Activated B cell treated with CpG ODN at 0.5 μM for 24 hours (primary cell): ENCODE measurements at regions of chr5 and their contacts with region 1.

Region 1: DNA sequence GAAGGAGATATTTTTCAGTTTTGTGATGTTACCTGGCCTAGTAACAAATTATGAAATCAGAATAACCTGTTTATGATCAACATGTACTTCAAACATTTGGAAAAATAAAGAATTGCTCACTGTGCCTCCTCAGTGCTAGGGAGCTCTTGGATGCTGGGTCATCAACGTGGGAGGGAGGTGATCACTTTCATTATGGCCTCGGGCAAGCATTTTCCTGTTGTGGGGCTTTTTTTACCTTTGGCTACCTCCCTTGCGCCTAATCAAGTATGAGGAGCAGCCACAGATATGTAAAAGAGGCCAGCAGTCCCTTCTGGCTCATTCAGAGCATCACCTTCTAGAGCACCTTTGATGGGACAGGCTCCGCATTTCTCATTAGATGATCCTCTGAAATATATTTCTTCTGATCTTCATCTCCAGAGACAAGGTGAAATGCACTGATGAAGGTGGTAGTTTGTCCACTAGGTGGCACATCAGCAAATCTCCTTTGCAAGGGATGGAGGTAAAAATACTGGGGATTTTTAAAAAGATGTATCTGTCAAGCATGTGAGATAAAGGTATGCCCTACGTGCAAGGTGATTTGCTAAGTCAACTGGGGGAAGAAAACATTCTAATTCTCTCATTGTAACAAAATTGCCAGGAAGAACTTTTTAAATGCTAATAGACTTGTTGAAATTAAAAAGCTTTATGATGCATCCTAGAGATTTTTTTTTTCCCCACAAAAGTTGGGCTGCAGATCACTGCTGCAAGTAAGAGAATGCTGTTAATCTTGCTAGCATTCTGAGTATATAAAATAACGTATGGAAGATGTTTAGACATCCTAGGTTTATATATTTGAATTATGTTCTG is 218.2 kb downstream of the MAST4 start:
- DNase-seq: no peak
- ATAC-seq: no peak
- H3K4me3 Mint-ChIP-seq: no peak overlapping the region
- H3K27ac Mint-ChIP-seq: no peak overlapping the region
- H3K4me1 Mint-ChIP-seq: peaks cover 11% of the 10 kb centered on the region
- H3K27me3 Mint-ChIP-seq: peaks cover 5% of the 10 kb centered on the region
- CTCF ChIP-seq: no peak

Region 2: DNA sequence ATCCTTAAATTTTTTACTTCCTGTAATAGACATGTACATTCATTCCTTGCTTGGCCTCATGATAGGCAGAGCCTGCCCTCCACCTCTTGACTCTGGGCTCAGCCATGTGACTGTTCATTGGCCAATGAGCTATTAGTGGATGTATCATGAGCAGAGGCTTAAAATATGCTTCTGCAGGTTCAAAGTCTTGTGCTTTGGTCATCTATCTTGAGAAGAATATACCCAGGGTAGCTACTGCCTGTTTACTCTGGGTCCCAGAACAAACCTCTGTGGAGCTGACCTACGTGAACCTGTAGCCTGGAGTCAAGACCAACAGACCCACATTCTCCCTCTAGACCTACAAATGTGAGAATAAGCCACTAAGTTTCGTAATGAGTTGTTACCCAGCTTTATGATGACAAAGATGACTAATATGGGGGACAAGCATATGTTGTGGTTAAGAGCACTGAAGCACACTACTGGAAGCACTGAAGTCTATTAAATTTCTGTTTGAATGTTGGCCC is 26.2 kb after region 1 on chr5:
- CTCF ChIA-PET with region 1: interaction called, 3 read pairs
- POLR2A ChIA-PET with region 1: no interaction called
- intact Hi-C with region 1: loop called (anchors 1 kb)
- DNase-seq: no peak
- ATAC-seq: peak; percentile 92
- H3K4me3 Mint-ChIP-seq: no peak overlapping the region
- H3K27ac Mint-ChIP-seq: no peak overlapping the region
- H3K4me1 Mint-ChIP-seq: peaks cover 16% of the 10 kb centered on the region
- H3K27me3 Mint-ChIP-seq: peaks cover 8% of the 10 kb centered on the region
- CTCF ChIP-seq: no peak

Region 3: GRCh38 chr5:66864331-66864840 is 50.0 kb after region 1 on chr5:
- CTCF ChIA-PET with region 1: no interaction called
- POLR2A ChIA-PET with region 1: no interaction called
- intact Hi-C with region 1: loop called (anchors 1 kb)
- DNase-seq: no peak
- ATAC-seq: no peak
- H3K4me3 Mint-ChIP-seq: no peak overlapping the region
- H3K27ac Mint-ChIP-seq: no peak overlapping the region
- H3K4me1 Mint-ChIP-seq: no peaks in the 10 kb centered on the region
- H3K27me3 Mint-ChIP-seq: peaks cover 13% of the 10 kb centered on the region
- CTCF ChIP-seq: no peak

Region 4: GRCh38 chr5:66933066-66933465 is 118.7 kb after region 1 on chr5:
- CTCF ChIA-PET with region 1: no interaction called
- POLR2A ChIA-PET with region 1: no interaction called
- intact Hi-C with region 1: loop called (anchors 10 kb)
- DNase-seq: no peak
- ATAC-seq: no peak
- H3K4me3 Mint-ChIP-seq: no peak overlapping the region
- H3K27ac Mint-ChIP-seq: no peak overlapping the region
- H3K4me1 Mint-ChIP-seq: peaks cover 15% of the 10 kb centered on the region
- H3K27me3 Mint-ChIP-seq: peaks cover 6% of the 10 kb centered on the region
- CTCF ChIP-seq: no peak

Region 5: DNA sequence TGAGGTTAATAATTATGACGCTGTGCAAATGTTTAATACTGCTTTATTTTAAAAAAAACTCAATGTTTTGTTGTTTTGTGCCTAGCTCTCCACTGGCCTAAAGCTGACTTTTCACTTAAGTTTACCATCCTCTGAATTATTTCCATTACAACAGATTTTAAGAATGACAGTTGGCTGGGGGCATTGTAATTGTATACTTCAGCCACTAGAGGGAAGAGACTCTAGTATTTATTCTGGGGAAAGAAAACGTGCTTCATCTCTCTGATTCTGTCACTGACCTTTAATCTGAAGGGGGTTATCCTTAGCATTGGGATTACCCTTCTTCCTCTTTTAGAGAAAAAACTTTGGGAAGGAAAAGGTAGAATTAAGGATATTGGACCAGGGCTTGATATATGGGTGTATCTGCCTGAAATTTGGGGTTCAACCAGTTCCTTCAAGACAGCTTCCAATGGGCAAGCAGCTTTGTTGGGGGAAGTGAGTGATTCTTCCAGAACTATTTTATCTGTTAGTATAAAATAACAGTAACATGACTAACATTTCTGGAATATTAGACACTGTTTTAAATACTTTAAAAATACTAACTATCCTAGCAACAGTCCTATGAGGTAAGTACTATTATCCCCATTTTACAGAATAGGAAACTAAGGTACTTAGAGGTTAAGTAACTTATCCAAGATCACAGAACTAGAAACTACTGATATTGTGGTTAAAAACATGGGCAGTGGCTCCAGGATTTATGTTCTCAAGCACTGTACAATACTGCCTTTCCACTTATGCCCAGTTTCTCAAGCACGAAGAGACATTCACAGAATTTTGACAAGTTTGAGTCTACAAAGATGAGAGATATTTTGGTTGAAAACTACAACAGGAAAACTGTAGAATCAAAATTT is 173.8 kb after region 1 on chr5:
- CTCF ChIA-PET with region 1: interaction called, 5 read pairs
- POLR2A ChIA-PET with region 1: no interaction called
- intact Hi-C with region 1: loop called (anchors 1 kb)
- DNase-seq: no peak
- ATAC-seq: peak; percentile 70
- H3K4me3 Mint-ChIP-seq: no peak overlapping the region
- H3K27ac Mint-ChIP-seq: no peak overlapping the region
- H3K4me1 Mint-ChIP-seq: peaks cover 6% of the 10 kb centered on the region
- H3K27me3 Mint-ChIP-seq: no peaks in the 10 kb centered on the region
- CTCF ChIP-seq: peak; percentile 57

Region 6: GRCh38 chr5:67149951-67150523 is 335.7 kb after region 1 on chr5:
- CTCF ChIA-PET with region 1: interaction called, 5 read pairs
- POLR2A ChIA-PET with region 1: no interaction called
- intact Hi-C with region 1: loop called (anchors 5 kb)
- DNase-seq: no peak
- ATAC-seq: no peak
- H3K4me3 Mint-ChIP-seq: no peak overlapping the region
- H3K27ac Mint-ChIP-seq: no peak overlapping the region
- H3K4me1 Mint-ChIP-seq: no peaks in the 10 kb centered on the region
- H3K27me3 Mint-ChIP-seq: no peaks in the 10 kb centered on the region
- CTCF ChIP-seq: no peak